H1 (cell line): ENCODE measurements at regions of chr20 and their contacts with region 1.

Region 1: DNA sequence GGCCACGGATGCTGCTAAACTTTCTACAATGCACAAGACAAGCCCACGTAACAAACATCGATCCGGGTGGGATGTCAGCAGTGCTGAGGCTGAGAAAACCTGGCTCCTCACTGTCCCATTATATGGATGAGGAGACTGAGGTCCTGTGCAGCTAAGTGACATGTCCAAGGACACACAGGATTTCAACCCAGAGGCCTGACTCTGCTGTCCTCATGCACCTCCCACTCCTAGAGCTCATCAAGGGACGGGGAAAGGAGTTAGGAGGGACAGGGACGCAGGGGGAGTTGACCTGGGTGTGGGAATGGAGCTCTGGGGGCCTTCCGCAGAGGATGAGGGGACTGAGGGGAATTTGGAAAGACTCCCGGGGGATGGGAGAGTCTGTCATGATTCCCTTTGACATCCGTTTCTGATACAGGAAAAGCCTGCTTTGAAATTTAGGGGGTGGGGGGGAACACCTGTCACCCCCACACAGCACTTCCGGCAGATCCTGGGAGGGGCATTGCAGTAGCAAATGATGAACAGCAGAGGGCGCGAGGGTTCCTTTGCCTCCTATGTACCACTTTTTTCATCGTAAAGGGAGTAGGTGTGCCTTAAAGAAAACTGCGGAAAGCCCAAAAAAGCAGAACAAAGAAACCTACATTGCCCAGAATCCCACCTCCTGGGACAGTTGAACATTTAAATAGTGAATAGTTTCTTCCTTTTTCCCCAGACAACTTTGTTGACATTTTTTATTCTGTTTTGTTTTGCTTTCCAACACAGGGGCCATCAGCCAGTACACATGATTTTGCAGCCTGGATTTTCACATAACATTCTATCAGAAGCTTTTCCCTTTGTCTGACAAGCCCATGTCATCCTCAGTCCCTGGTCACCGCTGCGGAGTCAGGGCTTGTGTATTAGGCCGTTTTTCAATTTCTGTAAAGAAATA is 48.6 kb downstream of the SLC2A10 start:
- DNase-seq: peak in 1 of 2 experiments; percentile 84
- H3K4me3 ChIP-seq: no peak overlapping the region
- H3K27ac ChIP-seq: no peak overlapping the region
- H3K4me1 ChIP-seq: no peaks in the 10 kb centered on the region
- H3K27me3 ChIP-seq: no peaks in the 10 kb centered on the region
- CTCF ChIP-seq: peak; percentile 81 to 89 (median 89)
- EP300 ChIP-seq: no peak
- POLR2A ChIP-seq: no peak
- RAD21 ChIP-seq: peak; percentile 88 to 89

Region 2: DNA sequence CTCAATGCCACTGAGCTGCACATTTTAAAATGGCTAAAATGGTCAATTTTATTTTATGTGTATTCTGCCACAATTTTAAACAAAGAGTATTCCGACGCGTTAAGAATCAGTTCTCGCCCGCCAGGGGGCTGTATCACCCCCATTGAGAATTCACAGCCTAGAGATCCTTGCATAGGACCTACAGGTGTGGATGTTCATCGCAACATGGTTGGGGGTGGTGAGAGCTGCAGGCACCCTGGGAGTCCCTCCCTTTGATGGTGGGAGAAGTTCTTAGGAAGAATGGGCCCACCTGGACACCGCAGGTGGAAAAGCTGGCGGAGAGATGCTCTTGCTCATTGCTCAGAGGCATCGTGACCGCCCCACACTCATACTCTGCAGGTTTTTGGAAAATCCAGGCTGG is 14.9 kb after region 1 on chr20:
- CTCF ChIA-PET with region 1: interaction called, 21 read pairs
- POLR2A ChIA-PET with region 1: no interaction called
- DNase-seq: no peak
- H3K4me3 ChIP-seq: no peak overlapping the region
- H3K27ac ChIP-seq: no peak overlapping the region
- H3K4me1 ChIP-seq: no peaks in the 10 kb centered on the region; a peak in 1 of 7 replicates
- H3K27me3 ChIP-seq: no peaks in the 10 kb centered on the region; a peak in 1 of 7 replicates
- CTCF ChIP-seq: peak in 2 of 3 experiments; percentile 18 to 25; a peak in 2 of 4 replicates
- EP300 ChIP-seq: no peak
- POLR2A ChIP-seq: no peak
- RAD21 ChIP-seq: peak; percentile 41 to 51

Region 3: DNA sequence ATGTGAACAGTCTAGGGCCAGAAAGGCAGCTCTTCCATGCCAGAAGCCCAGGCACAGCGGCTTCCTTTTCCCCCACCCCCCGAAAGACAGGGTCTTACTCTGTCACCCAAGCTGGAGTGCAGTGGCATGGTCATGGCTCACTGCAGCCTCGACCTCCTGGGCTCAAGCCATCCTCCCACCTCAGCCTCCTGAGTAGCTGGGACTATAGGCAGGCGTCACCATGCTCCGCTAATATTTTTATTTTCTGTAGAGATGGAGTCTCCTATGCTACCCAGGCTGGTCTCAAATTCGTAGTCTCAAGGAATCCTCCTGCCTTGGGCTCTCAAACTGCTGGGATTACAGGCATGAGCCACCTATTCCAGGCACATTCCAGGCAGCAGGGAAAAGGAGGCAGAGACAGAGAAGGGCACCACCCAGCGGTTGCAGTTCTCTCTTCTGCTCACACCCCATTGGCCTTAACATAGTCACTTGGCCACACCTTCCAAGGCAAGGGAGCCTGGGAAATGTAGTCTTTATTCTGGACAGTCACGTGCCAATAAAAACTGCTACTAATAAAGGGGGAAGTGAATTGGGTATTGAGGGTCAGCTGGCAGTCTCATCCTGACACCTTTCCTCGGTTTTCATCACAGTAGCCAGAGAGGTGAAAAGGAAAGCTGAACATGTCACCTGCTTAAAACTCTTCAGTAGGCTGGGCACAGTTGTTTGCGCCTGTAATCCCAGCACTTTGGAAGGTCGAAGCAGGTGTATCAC is 392.6 kb after region 1 on chr20:
- CTCF ChIA-PET with region 1: interaction called, 35 read pairs
- POLR2A ChIA-PET with region 1: no interaction called
- DNase-seq: peak; percentile 51 to 84
- H3K4me3 ChIP-seq: no peak overlapping the region
- H3K27ac ChIP-seq: no peak overlapping the region
- H3K4me1 ChIP-seq: peaks cover 0 to 3% (median 0%) of the 10 kb centered on the region in 4 experiments; a peak in 1 of 7 replicates
- H3K27me3 ChIP-seq: no peaks in the 10 kb centered on the region
- CTCF ChIP-seq: peak; percentile 87 to 97 (median 89)
- EP300 ChIP-seq: no peak
- POLR2A ChIP-seq: no peak
- RAD21 ChIP-seq: peak; percentile 94 to 95